ENCODE measurements at regions of chr9 and their contacts with region 1.

Region 1: GRCh38 chr9:109232449-109233237 is 65.6 kb upstream of the FRRS1L start:
- DNase-seq: peak; percentile 83
- H3K4me3 Mint-ChIP-seq: peak overlapping the region; percentile 18
- H3K27ac Mint-ChIP-seq: peak overlapping the region; percentile 71
- H3K4me1 Mint-ChIP-seq: peaks cover 19% of the 10 kb centered on the region
- H3K27me3 Mint-ChIP-seq: no peaks in the 10 kb centered on the region
- CTCF ChIP-seq: no peak

Region 2: GRCh38 chr9:109198736-109199379 is 33.8 kb before region 1 on chr9:
- CTCF ChIA-PET with region 1: no interaction called
- POLR2A ChIA-PET with region 1: interaction called, 4 read pairs
- intact Hi-C with region 1: loop called (anchors 5 kb)
- DNase-seq: peak; percentile 13
- H3K4me3 Mint-ChIP-seq: no peak overlapping the region
- H3K27ac Mint-ChIP-seq: no peak overlapping the region
- H3K4me1 Mint-ChIP-seq: no peaks in the 10 kb centered on the region
- H3K27me3 Mint-ChIP-seq: no peaks in the 10 kb centered on the region
- CTCF ChIP-seq: no peak

Region 3: DNA sequence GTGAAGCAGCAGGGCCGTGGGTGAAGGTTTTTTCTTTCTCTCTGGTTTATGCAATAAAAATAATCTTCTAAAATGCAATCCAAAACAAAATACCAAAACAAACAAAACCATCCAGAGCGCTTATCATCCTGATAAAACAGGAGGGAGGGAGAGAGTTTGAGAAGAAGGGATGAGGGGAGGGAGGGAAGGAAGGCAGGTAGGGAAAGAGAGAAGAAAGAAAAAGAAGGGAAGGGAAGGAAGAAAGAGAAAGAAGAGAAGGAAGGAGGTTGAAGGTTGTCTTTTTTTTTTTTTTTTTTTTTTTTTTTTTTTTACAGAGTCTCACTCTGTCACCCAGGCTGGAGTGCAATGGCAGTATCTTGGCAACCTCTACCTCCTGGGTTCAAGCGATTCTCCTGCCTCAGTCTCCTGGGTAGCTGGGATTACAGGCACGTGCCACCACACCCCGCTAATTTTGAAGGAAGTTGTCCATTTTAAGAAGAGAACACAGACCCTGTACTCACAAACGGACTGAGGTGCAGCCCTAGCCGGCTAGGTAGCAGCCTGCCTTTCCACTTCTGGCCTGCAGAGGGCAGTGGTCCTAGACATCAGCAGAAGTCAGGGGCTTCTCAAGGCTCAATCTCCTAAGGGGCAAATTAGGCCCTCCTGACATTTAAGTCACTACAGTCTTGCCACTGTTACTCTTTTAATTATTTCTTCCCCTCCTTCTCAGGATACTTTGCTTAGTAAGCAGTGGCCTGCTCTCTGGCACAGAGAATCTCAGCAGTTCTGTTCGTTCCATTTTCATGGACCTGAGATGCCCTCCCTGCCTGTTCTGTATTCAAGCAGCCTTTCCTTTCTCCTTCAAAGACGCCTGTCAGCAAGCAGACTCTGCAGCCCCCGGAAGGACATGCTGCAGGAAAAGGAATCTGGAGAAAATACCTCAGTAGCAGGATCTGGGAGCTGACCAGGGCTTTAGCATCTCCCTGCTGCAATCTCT is 11.8 kb after region 1 on chr9:
- CTCF ChIA-PET with region 1: interaction called, 11 read pairs
- POLR2A ChIA-PET with region 1: interaction called, 3 read pairs
- intact Hi-C with region 1: no loop called
- DNase-seq: peak; percentile 73
- H3K4me3 Mint-ChIP-seq: no peak overlapping the region
- H3K27ac Mint-ChIP-seq: no peak overlapping the region
- H3K4me1 Mint-ChIP-seq: peaks cover 14% of the 10 kb centered on the region
- H3K27me3 Mint-ChIP-seq: no peaks in the 10 kb centered on the region
- CTCF ChIP-seq: peak; percentile 96

Region 4: DNA sequence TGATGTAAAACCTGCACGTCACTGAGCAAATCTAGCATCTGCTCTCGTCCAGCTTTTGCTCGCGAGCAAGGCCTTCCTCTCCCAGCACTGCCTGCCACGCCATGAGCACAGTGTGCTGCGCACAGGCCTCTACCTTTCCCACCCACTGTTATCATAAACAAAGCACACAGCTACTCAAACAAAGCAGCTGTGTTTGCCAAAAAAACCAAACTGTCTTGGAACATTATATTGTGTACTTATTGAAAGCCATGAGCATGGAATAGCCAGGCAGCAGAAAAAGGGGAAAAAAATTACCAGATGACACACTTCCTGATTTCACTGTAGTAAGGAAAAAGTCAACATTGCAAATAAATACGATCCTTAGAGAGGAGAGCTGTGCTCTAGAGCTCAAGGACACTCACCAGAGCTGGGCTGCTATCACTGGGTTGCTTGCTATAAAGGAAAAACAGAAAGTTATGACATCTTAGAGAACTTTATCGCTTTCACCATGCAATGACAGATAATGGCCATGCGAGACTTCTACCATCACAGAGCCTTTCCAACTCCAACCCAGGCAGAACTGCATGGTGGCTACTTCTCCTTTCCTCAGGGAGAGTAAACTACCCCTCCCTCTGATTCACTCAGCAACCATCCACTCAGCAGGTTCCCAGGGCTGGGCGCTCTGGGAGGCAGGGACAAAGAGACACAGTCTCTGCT is 18.6 kb after region 1 on chr9:
- CTCF ChIA-PET with region 1: interaction called, 8 read pairs
- POLR2A ChIA-PET with region 1: interaction called, 17 read pairs
- intact Hi-C with region 1: no loop called
- DNase-seq: peak; percentile 84
- H3K4me3 Mint-ChIP-seq: peak overlapping the region; percentile 59
- H3K27ac Mint-ChIP-seq: peak overlapping the region; percentile 96
- H3K4me1 Mint-ChIP-seq: peaks cover 50% of the 10 kb centered on the region
- H3K27me3 Mint-ChIP-seq: no peaks in the 10 kb centered on the region
- CTCF ChIP-seq: no peak

Measured in MCF 10A (cell line).